PC-3 (cell line): ENCODE measurements at regions of chr6 and their contacts with region 1.

Region 1: DNA sequence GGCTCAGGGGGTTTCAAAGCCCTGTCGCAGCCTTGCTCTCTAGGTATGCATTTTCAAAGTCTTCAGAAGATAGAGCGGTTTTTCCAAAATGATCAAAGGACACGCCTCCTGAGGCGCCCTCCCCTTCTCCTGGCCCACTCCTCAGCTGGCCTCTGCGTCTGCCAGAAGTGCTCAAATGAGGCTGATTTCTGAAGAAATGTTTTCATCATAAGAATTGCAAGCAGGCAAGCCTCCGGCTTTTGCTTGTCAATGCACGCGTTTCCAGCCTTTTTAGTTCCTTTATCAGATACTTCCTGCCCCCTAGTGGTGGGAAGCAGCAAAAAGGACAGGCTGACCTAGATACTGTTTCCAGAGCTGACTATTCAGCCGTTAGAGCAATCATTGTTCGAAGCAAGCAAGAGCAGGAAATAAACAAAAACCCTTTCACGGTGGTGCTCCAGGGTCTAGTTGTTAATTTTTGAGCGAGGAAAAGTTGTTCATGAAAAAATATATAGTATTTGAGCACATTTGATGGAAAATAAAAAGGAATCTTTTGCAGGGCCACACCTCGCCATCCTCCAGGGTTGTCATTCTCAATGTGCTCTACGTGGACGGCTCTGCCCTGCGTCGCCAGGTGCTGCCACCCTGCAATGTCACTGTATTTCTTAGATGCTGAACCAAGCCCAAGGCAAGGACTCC is 93.4 kb upstream of the ASF1A start:
- DNase-seq: peak; percentile 90
- ATAC-seq: peak; percentile 92
- H3K4me3 ChIP-seq: peak overlapping the region; percentile 25; the same call in 1 of the 2 replicates
- H3K27ac ChIP-seq: no peak overlapping the region
- H3K4me1 ChIP-seq: no peaks in the 10 kb centered on the region; the same call in 1 of the 2 replicates
- H3K27me3 ChIP-seq: no peaks in the 10 kb centered on the region
- CTCF ChIP-seq: peak; percentile 88

Region 2: DNA sequence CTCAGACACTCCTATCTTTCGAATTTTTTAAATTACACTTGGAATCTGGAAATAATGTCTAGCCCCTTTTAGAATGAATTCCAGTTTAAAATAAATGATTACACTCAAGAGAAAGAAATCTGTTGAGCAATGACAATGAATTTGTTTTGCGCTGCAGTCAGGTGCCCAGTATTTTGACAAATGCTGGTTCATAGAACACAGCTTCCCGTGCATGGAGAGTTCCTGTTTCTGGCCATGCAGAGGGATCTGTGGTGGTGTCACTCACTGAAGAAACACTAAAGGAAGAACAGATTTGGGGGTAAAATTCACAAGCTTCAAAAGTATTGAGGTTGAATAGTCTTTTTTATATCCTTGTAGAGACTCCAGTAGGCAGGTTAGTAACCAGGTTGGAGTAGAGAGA is 35.8 kb before region 1 on chr6:
- CTCF ChIA-PET with region 1: no interaction called
- POLR2A ChIA-PET with region 1: no interaction called
- intact Hi-C with region 1: no loop called
- DNase-seq: no peak
- ATAC-seq: no peak
- H3K4me3 ChIP-seq: no peak overlapping the region
- H3K27ac ChIP-seq: no peak overlapping the region
- H3K4me1 ChIP-seq: peaks cover 11% of the 10 kb centered on the region
- H3K27me3 ChIP-seq: no peaks in the 10 kb centered on the region
- CTCF ChIP-seq: no peak

Region 3: DNA sequence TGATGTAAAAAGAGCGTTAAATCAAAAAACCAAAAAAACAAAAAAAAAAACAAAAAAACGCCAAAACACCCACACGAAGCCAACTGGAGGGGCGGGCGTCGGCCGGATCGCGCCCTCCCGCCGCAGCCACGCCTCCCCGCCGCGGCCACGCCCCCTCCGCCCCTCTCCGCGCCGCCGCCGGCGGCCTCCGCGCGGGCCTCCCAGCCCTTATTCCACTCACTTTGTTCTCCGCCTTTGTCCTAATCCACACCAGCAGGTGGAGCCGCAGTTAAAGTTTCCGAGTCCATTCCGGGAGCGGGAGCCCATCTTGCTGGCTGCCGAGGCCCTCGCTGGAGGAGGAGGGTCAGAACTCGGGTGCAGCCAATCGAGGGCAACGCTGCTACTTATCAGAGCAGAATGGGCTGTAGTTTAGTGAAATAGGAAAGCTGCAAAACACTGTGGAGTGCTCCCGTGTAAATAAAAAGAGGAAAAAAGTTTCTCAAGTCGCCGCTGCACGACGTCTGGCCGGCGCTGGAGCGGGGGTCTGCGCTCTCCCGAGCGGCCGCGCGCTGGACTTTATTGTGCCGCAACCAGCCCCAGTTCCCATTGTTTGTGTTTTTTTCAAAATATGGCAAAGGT is 93.4 kb after region 1 on chr6 and contains the start of gene ASF1A:
- CTCF ChIA-PET with region 1: interaction called, 9 read pairs
- POLR2A ChIA-PET with region 1: no interaction called
- intact Hi-C with region 1: loop called (anchors 2 kb)
- DNase-seq: peak; percentile 95
- ATAC-seq: peak; percentile 78
- H3K4me3 ChIP-seq: peak within 1 kb of the TSS; percentile 99
- H3K27ac ChIP-seq: peak within 1 kb of the TSS; percentile 86
- H3K4me1 ChIP-seq: peaks cover 29% of the 10 kb centered on the region
- H3K27me3 ChIP-seq: no peaks in the 10 kb centered on the region
- CTCF ChIP-seq: peak; percentile 60
- total RNA-seq, gene ASF1A: 24.6 and 25.0 TPM in 2 replicates